Testis (tissue), 5 donors: ENCODE measurements at regions of chr15 and their contacts with region 1.

Region 1: DNA sequence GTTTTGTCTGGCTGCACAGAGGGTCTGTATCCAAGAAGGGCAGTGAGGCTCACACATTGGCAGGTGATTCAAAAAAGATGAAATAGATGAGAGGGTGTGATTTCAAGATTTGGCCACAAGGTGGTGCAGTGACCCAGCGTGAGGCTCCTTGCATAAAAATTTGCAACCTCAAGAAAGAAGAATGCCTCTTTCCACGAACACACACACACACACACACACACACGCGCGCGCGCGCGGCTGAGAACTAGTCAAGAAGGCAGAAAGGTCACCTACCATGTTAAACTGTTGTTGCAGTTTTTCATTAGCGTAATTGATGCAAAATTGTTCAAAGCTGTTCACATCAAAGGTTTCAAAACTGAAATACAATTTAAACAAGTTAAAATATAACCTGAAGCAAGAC is 39.2 kb downstream of the MYO5C start:
- DNase-seq: peak; percentile 82
- H3K4me3 ChIP-seq: no peak overlapping the region
- H3K27ac ChIP-seq: no peak overlapping the region
- H3K4me1 ChIP-seq: peaks cover 2% of the 10 kb centered on the region
- H3K27me3 ChIP-seq: no peaks in the 10 kb centered on the region
- CTCF ChIP-seq: peak; percentile 81 to 92 (median 90)
- POLR2A ChIP-seq: no peak

Region 2: DNA sequence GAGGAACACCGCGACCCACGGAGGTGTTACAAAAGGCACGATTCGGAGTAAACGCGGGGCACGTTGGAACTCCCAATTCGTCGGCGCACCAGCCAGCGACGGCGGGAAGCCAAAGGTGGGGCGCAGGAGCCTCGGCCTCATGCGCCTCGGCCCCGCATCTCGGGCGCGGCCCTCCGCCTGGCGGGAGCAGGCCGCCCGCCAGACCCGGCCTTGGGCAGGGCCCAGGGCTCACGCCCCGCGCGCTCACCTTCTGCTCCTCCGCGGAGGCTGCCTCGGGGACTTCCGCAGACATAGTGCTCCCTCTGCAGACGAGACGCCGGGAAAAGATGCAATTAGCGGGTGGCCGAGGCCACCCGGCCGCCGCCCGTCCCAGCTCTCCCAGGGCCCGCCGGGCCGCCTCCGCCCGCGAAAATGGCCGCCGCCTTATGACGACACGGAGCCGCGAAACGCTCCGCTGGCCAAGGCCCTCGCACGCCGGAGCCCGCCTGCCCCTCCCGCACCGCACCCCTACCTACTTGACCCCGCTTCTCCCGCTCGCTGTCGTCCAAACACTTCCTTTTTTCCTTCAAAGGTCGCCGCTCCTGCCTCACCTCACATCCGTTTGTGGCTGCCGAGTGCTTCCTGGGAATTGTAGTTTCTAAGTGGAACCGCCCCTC is 312.4 kb after region 1 on chr15 and contains the start of gene ARPP19:
- intact Hi-C with region 1: no loop called
- DNase-seq: peak; percentile 97
- H3K4me3 ChIP-seq: peak within 1 kb of the TSS; percentile 76 to 95
- H3K27ac ChIP-seq: peak within 1 kb of the TSS; percentile 93 to 97
- H3K4me1 ChIP-seq: peaks cover 19% of the 10 kb centered on the region
- H3K27me3 ChIP-seq: no peaks in the 10 kb centered on the region
- CTCF ChIP-seq: no peak
- POLR2A ChIP-seq: no peak
- total RNA-seq, gene ARPP19: 114 to 139 TPM

Region 3: DNA sequence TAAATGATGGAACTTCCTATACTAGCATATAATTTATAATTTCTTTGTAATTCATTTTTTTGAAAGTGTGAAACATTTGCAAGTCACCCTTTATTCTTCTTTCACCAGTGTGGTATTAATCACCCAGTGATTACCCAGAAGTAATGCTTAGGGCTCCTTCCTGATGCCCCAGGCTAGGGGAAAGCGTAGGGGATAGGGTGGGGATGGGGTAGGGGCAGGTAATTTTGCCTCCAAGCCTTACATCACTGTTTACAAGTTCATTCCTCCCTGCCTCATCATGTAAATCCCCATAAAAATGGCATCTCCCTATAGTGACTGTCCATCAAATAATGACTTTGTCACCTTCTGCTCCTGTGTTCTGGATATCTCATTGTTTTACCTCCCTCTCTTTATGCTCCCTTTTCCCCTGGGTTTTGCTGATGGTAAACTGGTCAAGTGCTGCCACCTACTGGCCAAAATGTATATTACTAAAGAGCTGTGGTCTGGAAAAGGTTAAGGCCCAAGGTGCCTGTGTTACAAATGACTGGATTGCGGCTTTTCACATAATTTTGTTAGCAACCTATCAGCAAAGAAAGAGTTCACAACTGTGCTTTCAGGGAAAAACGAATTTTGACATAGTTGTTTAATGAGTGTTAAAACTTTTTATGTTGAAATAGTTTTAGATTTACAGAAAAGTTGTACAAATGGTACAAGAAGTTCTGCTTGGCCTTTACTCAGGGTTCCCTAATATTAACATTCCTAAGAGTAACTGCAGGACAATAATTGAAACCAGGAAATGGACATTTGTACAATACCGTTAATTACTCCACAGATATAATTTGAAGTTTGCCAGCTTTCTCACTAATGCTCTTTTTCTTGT is 479.1 kb after region 1 on chr15:
- intact Hi-C with region 1: loop called (anchors 5 kb)
- DNase-seq: peak; percentile 86
- H3K4me3 ChIP-seq: no peak overlapping the region
- H3K27ac ChIP-seq: no peak overlapping the region
- H3K4me1 ChIP-seq: peaks cover 7% of the 10 kb centered on the region
- H3K27me3 ChIP-seq: no peaks in the 10 kb centered on the region
- CTCF ChIP-seq: peak; percentile 91 to 97 (median 95)
- POLR2A ChIP-seq: no peak

Region 4: DNA sequence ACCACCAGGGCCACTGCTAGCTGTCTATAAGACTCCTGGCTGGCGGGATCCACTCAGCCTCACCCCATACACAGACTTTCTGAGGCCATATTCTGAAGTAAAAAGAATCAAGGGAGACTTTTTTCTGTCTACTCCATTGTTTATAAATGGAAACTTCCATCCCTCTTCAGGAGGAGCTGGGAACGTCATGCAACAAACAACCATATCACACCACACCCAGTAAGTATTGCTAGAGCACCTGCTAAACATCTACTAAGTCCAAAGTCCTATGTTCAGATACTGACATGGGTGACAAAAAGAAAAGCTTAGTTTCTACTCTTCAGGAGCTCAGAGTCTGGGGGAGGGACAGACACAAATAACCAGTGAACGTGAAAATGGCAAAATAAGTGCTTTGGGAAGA is 858.6 kb after region 1 on chr15:
- intact Hi-C with region 1: no loop called
- DNase-seq: no peak
- H3K4me3 ChIP-seq: no peak overlapping the region
- H3K27ac ChIP-seq: no peak overlapping the region
- H3K4me1 ChIP-seq: no peaks in the 10 kb centered on the region
- H3K27me3 ChIP-seq: no peaks in the 10 kb centered on the region
- CTCF ChIP-seq: no peak
- POLR2A ChIP-seq: no peak